ENCODE measurements at regions of chr7 and their contacts with region 1.

Region 1: DNA sequence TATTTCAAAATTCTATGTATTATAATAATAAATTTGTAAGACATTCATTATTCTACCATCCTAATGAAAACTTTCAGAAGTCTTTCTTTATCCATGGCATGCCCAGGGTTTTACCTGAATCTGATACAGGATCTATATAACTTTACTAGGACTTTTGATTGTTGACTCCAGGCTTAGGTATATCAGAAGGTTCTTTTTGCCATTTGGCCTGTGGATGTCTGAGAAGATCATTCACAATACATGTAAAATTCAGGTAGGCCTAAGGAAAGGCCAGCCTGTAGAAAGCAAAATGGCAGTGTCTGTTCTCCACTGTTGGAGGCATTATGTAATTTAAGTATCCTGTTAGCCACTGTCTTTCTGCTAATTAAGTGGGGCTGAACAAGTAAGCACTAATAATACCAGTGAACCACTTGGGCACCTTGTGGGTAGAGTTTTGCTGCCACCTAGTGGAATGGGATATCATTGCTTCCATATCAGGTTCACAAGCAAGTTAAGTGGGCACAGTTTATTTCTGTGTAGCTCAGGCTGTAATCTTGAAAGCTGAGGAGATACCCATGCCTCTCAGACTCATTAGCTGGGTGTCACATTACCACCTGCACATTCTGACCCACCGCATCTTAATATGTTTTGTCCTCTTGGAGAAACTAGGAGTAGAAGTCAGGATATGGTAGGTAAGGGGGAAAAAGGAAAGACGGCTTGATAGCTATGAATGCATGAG is 105.5 kb downstream of the SEPTIN7 start:
- DNase-seq: peak; percentile 75
- ATAC-seq: peak; percentile 90
- H3K4me3 Mint-ChIP-seq: no peak overlapping the region
- H3K27ac Mint-ChIP-seq: no peak overlapping the region
- H3K4me1 Mint-ChIP-seq: peaks cover 2% of the 10 kb centered on the region
- H3K27me3 Mint-ChIP-seq: no peaks in the 10 kb centered on the region

Region 2: GRCh38 chr7:35424869-35425495 is 481.4 kb before region 1 on chr7:
- CTCF ChIA-PET with region 1: interaction called, 3 read pairs
- POLR2A ChIA-PET with region 1: no interaction called
- intact Hi-C with region 1: loop called (anchors 10 kb)
- DNase-seq: peak; percentile 75
- ATAC-seq: peak; percentile 74
- H3K4me3 Mint-ChIP-seq: no peak overlapping the region
- H3K27ac Mint-ChIP-seq: no peak overlapping the region
- H3K4me1 Mint-ChIP-seq: peaks cover 5% of the 10 kb centered on the region
- H3K27me3 Mint-ChIP-seq: peaks cover 3% of the 10 kb centered on the region

Region 3: GRCh38 chr7:35624299-35625186 is 281.8 kb before region 1 on chr7:
- CTCF ChIA-PET with region 1: interaction called, 10 read pairs
- POLR2A ChIA-PET with region 1: no interaction called
- intact Hi-C with region 1: no loop called
- DNase-seq: peak; percentile 54
- ATAC-seq: peak; percentile 95
- H3K4me3 Mint-ChIP-seq: no peak overlapping the region
- H3K27ac Mint-ChIP-seq: no peak overlapping the region
- H3K4me1 Mint-ChIP-seq: peaks cover 2% of the 10 kb centered on the region
- H3K27me3 Mint-ChIP-seq: no peaks in the 10 kb centered on the region

Region 4: GRCh38 chr7:35707422-35707821 is 198.9 kb before region 1 on chr7:
- CTCF ChIA-PET with region 1: interaction called, 16 read pairs
- POLR2A ChIA-PET with region 1: no interaction called
- intact Hi-C with region 1: loop called (anchors 1 kb)
- DNase-seq: no peak
- ATAC-seq: no peak
- H3K4me3 Mint-ChIP-seq: no peak overlapping the region
- H3K27ac Mint-ChIP-seq: no peak overlapping the region
- H3K4me1 Mint-ChIP-seq: peaks cover 15% of the 10 kb centered on the region
- H3K27me3 Mint-ChIP-seq: peaks cover 2% of the 10 kb centered on the region